ENCODE measurements at regions of chr5 and their contacts with region 1.

Region 1: DNA sequence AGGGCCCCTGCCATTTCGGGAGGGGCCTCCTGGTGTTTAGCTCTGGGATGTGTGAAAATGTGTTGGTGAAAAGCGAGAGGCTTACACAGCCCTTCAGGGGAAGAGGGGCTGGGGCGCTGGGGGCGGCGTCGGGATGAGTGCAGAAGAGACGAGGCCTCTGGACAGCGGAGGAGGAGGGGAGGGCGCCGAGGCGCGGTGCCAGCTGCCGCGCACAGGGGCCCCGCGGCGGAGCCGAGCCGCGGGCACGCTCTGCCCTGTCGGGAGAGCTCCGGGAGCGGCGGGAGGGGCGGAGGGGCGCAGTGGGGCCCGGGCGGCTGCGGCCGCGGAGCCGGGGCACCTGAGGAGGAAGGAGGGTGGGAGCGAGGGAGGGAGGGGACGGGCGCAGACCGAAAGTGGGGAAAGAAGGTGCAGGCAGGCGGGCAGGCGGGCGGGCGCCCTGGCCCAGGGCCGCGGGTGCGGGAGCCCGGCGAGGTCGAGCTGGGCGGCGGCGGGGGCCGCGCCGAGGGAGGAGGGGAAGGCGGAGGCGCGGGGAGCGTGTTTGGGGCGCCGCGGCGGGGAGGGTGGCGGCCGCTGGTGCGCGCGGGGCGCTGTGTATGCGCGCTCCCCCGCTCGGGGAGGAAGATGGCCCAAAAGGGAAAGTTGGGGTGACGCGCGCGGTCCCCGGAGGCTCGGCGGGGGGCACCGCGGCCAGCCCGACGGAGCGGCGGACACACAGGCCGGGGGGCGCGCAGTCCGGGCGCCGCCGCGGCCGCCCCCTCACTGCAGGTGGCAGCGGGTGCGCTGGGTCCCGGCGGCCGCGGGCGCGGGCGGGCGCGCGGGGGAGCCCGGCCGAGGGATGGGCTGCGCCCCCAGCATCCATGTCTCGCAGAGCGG is at the start of gene PDE8B:
- DNase-seq: peak in 4 of 10 donors; percentile 36 to 67 (median 58)
- H3K4me3 ChIP-seq: peak within 1 kb of the TSS; percentile 59 to 86 (median 74)
- H3K27ac ChIP-seq: peak within 1 kb of the TSS in 58 of 59 donors; percentile 4 to 86 (median 70)
- H3K27me3 ChIP-seq: no peaks in the 10 kb centered on the region
- CTCF ChIP-seq: no peak
- total RNA-seq, gene PDE8B: 22.7 to 100 (median 54.6) TPM

Region 2: GRCh38 chr5:77035950-77036349 is 174.4 kb before region 1 on chr5:
- intact Hi-C with region 1: no loop called
- DNase-seq: no peak
- H3K4me3 ChIP-seq: no peak overlapping the region
- H3K27ac ChIP-seq: no peak overlapping the region
- H3K27me3 ChIP-seq: no peaks in the 10 kb centered on the region
- CTCF ChIP-seq: no peak

Region 3: GRCh38 chr5:77155179-77155785 is 55.0 kb before region 1 on chr5:
- intact Hi-C with region 1: loop called in 1 of 2 experiments (anchors 10 kb)
- DNase-seq: no peak
- H3K4me3 ChIP-seq: no peak overlapping the region
- H3K27ac ChIP-seq: peak overlapping the region in 4 of 59 donors; percentile 6 to 80 (median 31)
- H3K27me3 ChIP-seq: no peaks in the 10 kb centered on the region
- CTCF ChIP-seq: no peak

Region 4: GRCh38 chr5:77170196-77170890 is 40.0 kb before region 1 on chr5:
- intact Hi-C with region 1: loop called in 1 of 2 experiments (anchors 5 kb)
- DNase-seq: no peak
- H3K4me3 ChIP-seq: no peak overlapping the region
- H3K27ac ChIP-seq: peak overlapping the region in 6 of 59 donors; percentile 11 to 46 (median 29)
- H3K27me3 ChIP-seq: no peaks in the 10 kb centered on the region
- CTCF ChIP-seq: no peak

Measured in dorsolateral prefrontal cortex (tissue), 120 donors.